ENCODE measurements at regions of chr9 and their contacts with region 1.

Region 1: DNA sequence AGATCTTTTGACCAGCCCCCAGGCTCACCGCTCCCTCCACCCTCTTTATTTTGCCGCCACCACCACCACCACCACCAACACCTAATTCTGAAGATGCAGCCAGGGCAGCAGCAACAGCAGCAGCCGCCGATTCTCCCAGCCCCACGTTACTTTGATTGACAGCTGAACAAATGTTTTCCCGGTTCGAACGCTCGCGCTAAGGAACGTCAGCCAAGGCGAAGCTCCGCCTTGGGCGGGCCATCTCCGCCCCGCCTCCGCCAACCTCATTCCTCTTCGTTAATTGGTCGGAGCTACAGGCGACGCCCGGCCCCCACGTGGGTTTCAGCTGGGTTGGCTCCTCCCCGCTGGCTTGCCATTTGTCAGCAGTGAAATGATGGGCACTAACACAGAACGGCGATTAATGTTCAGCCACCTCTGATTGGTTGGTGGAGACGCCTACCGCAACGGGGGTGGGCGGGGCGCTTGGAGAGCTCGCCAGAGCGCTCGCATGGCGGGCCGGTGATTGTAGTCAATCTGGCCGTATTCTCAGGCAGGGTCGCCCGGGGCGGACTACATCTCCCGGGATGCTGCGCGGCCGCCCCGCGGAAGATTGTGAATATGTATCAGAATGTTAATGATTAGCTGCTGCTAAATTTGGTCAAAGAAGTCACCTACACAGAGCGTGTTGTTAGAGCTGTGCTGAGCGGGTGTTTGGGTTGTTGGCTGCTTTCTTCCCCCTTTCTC is at the start of gene TLE4:
- DNase-seq: peak; percentile 100
- H3K4me3 ChIP-seq: peak within 1 kb of the TSS; percentile 85 to 100 (median 99)
- H3K27ac ChIP-seq: peak within 1 kb of the TSS; percentile 95 to 97 (median 96)
- H3K4me1 ChIP-seq: peaks cover 14 to 38% (median 35%) of the 10 kb centered on the region in 4 donors
- H3K27me3 ChIP-seq: peaks cover 0 to 8% (median 0%) of the 10 kb centered on the region in 4 donors
- CTCF ChIP-seq: no peak
- EP300 ChIP-seq: no peak
- POLR2A ChIP-seq: peak; percentile 87
- total RNA-seq, gene TLE4: 30.0 to 36.1 (median 34.3) TPM

Region 2: DNA sequence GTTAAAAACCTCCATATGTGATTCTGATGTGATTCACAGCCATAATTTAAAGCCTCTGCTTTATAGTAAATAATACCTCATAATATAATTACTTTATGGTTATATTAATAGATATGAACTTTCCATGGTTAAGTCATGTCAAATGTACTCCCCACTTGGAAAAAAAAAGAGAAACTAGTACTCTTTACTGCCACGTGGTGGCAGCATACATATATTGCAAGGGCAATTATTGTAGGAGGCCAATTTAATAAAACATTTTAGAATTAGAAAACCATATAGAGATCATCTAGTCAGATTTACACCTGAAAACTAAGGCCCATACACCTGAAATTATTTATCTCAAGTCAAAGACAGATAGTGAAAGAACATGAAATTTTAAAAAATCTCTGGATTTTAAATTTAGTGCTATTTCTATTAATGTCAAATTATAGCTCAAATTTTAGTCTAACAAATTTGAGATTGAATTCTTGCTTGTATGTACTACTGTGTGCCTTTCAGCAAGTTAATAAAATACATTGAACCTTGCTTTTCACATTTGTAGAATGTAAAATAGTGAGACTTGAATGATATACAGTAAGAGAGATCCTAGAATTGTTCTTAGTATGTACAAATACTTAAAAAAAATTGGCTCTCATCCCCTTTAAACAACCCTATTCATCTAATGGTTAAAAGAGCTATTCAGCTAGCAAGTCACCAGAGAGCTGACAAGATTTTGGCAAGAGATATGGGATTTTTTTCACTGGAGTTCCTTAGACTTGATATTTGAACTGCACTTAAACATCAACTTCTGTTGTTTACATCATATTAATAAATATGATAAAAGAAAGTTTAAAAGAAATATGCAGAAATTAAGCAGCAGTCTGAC is 604.0 kb after region 1 on chr9:
- intact Hi-C with region 1: loop called (anchors 10 kb)
- DNase-seq: no peak
- H3K4me3 ChIP-seq: no peak overlapping the region
- H3K27ac ChIP-seq: no peak overlapping the region
- H3K4me1 ChIP-seq: no peaks in the 10 kb centered on the region
- H3K27me3 ChIP-seq: no peaks in the 10 kb centered on the region
- CTCF ChIP-seq: peak; percentile 62 to 83 (median 73)
- EP300 ChIP-seq: no peak
- POLR2A ChIP-seq: no peak